ENCODE measurements at regions of chr2 and their contacts with region 1.

Region 1: GRCh38 chr2:197705121-197705911 is at the start of gene MARS2:
- DNase-seq: peak; percentile 78 to 96 (median 92)

Region 2: GRCh38 chr2:196361606-196362326 is 1343.5 kb before region 1 on chr2:
- intact Hi-C with region 1: no loop called
- DNase-seq: no peak

Region 3: GRCh38 chr2:197434541-197435513 is 270.5 kb before region 1 on chr2 and contains the start of gene SF3B1:
- intact Hi-C with region 1: loop called (anchors 5 kb)
- DNase-seq: peak; percentile 94 to 100 (median 98)

Region 4: GRCh38 chr2:197453161-197453914 is 252.0 kb before region 1 on chr2 and contains the start of gene COQ10B:
- intact Hi-C with region 1: loop called (anchors 5 kb)
- DNase-seq: peak; percentile 98 to 100 (median 100)

Region 5: DNA sequence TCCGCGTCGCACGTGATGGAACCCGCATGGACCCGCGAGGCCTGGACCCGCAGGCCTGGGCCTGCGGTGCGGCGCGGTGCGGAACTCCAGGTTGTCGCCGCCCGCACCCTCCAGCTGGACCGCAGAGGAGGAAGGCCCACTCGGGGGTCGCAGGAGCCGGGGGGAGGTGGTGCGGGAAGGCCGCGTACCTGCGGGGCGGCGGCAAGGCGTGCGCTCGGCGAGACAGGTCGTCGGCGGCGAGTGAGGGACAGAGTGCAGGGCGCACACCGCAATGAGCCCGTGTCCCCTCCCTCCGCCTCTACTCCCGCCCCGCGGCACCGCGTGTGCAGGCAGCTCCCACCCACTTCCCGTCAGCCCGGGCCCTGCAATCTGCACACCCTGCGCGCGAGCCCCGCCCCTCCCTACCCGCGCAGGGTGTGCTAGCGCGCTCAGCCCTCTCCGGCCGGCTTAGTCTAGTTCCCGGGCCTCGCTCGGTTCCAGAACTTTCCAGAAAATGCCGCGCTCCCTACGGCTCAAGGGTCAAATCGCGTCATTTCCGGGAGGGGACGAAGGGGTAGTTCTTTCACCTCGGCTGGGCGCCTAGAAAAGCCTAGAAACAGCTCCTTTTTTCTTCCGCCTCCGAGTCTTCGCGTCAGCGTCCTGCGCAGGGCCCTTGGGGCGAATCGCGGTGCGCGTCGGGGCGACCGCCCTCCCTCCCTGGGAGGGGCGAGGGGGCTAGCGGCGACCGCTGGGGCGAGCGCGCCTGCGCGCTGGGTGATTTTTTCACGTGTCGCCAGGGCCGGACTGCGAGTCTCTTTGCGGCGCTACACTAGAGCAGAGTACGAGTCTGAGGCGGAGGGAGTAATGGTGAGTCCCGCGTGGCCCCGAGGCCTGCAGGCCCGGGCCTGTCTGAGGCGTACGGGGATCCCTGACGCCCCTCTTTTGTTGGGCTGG is 205.5 kb before region 1 on chr2 and contains the starts of genes HSPD1 and HSPE1:
- intact Hi-C with region 1: loop called (anchors 2 kb)
- DNase-seq: peak; percentile 95 to 100 (median 98)

Region 6: GRCh38 chr2:197777823-197778407 is 72.6 kb after region 1 on chr2:
- intact Hi-C with region 1: loop called (anchors 5 kb)
- DNase-seq: peak in 6 of 42 donors; percentile 15 to 58 (median 29)